ENCODE measurements at regions of chr11 and their contacts with region 1.

Region 1: GRCh38 chr11:47259178-47259977 is 1.6 kb downstream of the NR1H3 start:
- DNase-seq: peak in 1 of 5 donors; percentile 26
- H3K4me3 ChIP-seq: no peak overlapping the region
- H3K4me3 Mint-ChIP-seq: no peak overlapping the region
- H3K27ac ChIP-seq: no peak overlapping the region
- H3K27ac Mint-ChIP-seq: peak overlapping the region in 2 of 7 donors; percentile 19 to 37
- H3K4me1 ChIP-seq: peaks cover 9% of the 10 kb centered on the region
- H3K4me1 Mint-ChIP-seq: peaks cover 0 to 5% (median 4%) of the 10 kb centered on the region in 4 donors
- H3K27me3 ChIP-seq: no peaks in the 10 kb centered on the region
- H3K27me3 Mint-ChIP-seq: no peaks in the 10 kb centered on the region

Region 2: GRCh38 chr11:47204637-47204989 is 54.8 kb before region 1 on chr11:
- CTCF ChIA-PET with region 1: no interaction called
- POLR2A ChIA-PET with region 1: no interaction called
- intact Hi-C with region 1: no loop called
- DNase-seq: no peak
- H3K4me3 ChIP-seq: no peak overlapping the region
- H3K4me3 Mint-ChIP-seq: no peak overlapping the region
- H3K27ac ChIP-seq: no peak overlapping the region
- H3K27ac Mint-ChIP-seq: no peak overlapping the region
- H3K4me1 ChIP-seq: no peaks in the 10 kb centered on the region
- H3K4me1 Mint-ChIP-seq: no peaks in the 10 kb centered on the region
- H3K27me3 ChIP-seq: no peaks in the 10 kb centered on the region
- H3K27me3 Mint-ChIP-seq: peaks cover 0 to 4% of the 10 kb centered on the region in 2 donors

Region 3: GRCh38 chr11:47233989-47234668 is 25.2 kb before region 1 on chr11:
- CTCF ChIA-PET with region 1: interaction called, 10 read pairs
- POLR2A ChIA-PET with region 1: interaction called, 3 read pairs
- intact Hi-C with region 1: no loop called
- DNase-seq: peak in 4 of 5 donors; percentile 11 to 61 (median 21)
- H3K4me3 ChIP-seq: no peak overlapping the region
- H3K4me3 Mint-ChIP-seq: peak overlapping the region; percentile 56 to 82 (median 70)
- H3K27ac ChIP-seq: peak overlapping the region; percentile 75
- H3K27ac Mint-ChIP-seq: peak overlapping the region; percentile 92 to 99 (median 97)
- H3K4me1 ChIP-seq: peaks cover 25% of the 10 kb centered on the region
- H3K4me1 Mint-ChIP-seq: peaks cover 7 to 32% (median 23%) of the 10 kb centered on the region in 4 donors
- H3K27me3 ChIP-seq: no peaks in the 10 kb centered on the region
- H3K27me3 Mint-ChIP-seq: no peaks in the 10 kb centered on the region

Region 4: GRCh38 chr11:47495011-47495855 is 235.9 kb after region 1 on chr11:
- CTCF ChIA-PET with region 1: no interaction called
- POLR2A ChIA-PET with region 1: no interaction called
- intact Hi-C with region 1: no loop called
- DNase-seq: no peak
- H3K4me3 ChIP-seq: no peak overlapping the region
- H3K4me3 Mint-ChIP-seq: no peak overlapping the region
- H3K27ac ChIP-seq: no peak overlapping the region
- H3K27ac Mint-ChIP-seq: no peak overlapping the region
- H3K4me1 ChIP-seq: peaks cover 35% of the 10 kb centered on the region
- H3K4me1 Mint-ChIP-seq: peaks cover 24 to 35% (median 25%) of the 10 kb centered on the region in 4 donors
- H3K27me3 ChIP-seq: no peaks in the 10 kb centered on the region
- H3K27me3 Mint-ChIP-seq: no peaks in the 10 kb centered on the region

Measured in CD4-positive, alpha-beta memory T cell (primary cell).